ENCODE measurements at regions of chr16 and their contacts with region 1.

Region 1: DNA sequence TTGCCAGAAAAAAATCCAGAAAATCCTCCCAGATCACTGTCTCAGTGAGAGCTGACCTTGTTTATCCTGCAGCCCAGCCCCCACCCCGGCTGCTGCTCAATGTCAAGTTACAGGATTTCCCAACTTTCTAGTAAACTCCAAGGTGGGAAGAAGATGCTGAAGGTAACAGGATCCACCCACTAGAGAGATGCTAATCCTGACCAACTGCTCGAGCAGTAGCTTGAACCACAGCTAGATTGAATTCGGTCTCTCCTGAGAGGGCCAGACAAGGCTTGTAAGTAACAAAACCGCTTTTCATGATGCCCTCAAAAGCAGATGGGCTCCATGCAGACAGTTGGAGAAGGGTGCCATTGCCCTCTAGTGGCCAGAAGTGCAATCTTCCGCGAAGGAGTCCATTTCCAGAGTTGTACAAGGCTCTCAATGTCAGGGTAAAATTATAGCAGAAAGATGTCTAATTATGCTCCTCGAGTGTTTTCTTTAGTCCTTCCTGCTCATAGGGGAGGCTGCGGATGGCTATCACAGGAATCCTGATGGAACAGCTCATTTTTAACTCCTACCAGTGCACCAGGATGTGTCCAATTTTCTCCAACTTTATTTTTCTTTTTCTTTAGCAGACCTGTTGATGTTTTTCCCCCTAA is 3.9 kb downstream of the CDH11 start:
- DNase-seq: peak; percentile 70
- H3K4me3 ChIP-seq: no peak overlapping the region
- H3K27ac ChIP-seq: peak overlapping the region in 3 of 4 donors; percentile 20 to 37 (median 21)
- H3K4me1 ChIP-seq: peaks cover 0 to 39% (median 20%) of the 10 kb centered on the region in 4 donors
- H3K27me3 ChIP-seq: peaks cover 34% of the 10 kb centered on the region
- CTCF ChIP-seq: peak; percentile 80 to 89 (median 87)
- EP300 ChIP-seq: no peak
- POLR2A ChIP-seq: no peak

Region 2: DNA sequence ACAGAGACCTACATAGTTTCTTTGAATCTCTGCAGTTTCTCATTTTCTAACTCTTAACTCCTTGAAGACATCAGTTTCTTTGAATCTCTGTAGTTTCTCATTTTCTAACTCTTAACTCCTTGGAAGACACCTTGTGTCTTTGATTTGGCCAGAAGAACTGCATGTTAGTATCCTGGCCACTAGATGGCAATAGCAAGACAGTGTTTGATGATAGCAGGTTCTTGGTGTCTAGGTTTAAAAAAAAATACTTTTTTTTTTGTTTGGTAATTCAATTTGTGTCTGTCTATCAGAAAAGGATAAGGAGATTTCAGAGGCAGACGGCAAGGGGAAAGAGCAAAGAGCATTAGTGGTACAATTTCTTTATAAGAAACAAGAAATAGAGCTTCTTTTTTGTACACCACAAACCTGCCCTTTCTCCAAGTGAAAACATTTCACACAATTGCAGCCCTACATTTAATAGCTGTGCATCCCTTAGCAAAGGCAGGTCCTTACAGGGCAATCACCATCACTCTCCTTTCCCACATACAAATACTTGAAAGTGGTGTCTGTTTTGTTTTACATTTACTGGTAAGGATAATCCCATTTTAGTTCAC is 1756.8 kb before region 1 on chr16:
- in situ Hi-C with region 1: loop called in 1 of 4 experiments (anchors 25 kb)
- intact Hi-C with region 1: no loop called
- DNase-seq: no peak
- H3K4me3 ChIP-seq: no peak overlapping the region
- H3K27ac ChIP-seq: no peak overlapping the region
- H3K4me1 ChIP-seq: no peaks in the 10 kb centered on the region
- H3K27me3 ChIP-seq: no peaks in the 10 kb centered on the region
- CTCF ChIP-seq: peak; percentile 55 to 77 (median 61)
- EP300 ChIP-seq: no peak
- POLR2A ChIP-seq: no peak

Region 3: GRCh38 chr16:64089697-64090096 is 1028.2 kb before region 1 on chr16:
- in situ Hi-C with region 1: loop called in 1 of 4 experiments (anchors 25 kb)
- intact Hi-C with region 1: no loop called
- DNase-seq: no peak
- H3K4me3 ChIP-seq: no peak overlapping the region
- H3K27ac ChIP-seq: no peak overlapping the region
- H3K4me1 ChIP-seq: no peaks in the 10 kb centered on the region
- H3K27me3 ChIP-seq: no peaks in the 10 kb centered on the region
- CTCF ChIP-seq: peak in 3 of 5 experiments; percentile 29 to 33 (median 32)
- EP300 ChIP-seq: no peak
- POLR2A ChIP-seq: no peak

Region 4: DNA sequence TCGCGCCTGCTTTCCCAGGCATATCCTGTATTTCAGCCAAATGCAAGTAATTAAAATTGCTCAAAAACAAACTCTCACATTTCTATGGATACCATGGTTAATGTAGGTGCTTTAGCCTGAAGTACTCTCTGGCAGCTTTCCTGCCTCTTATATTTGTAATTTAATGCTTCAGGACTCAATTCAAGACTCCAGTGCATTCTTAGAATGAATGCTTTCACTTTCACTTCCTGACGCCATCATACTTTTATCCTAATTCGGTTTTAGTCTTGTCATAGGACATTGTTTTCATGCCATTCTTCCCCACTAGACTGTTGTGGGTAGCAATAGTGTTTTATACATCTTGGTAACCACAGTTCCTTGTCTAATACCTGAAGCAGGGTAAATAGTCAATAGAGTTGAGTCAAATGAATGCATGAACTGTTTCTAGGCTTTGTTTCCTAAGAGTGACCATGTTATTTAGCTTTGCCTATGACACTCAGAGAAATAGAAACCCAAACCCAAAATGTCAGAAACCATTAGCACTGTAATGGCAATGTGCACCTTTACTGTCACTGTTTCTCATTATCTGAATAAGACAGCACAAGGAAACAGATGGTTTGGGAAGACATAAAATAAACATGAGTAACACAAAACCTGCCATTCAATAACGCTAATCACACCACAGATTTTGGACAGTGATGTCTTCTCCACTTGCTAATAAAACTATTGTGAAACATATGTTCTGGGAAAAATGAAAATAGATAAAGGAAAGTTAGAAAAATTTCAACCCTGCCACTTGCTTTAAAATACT is 701.5 kb before region 1 on chr16:
- in situ Hi-C with region 1: loop called in 1 of 4 experiments (anchors 25 kb)
- intact Hi-C with region 1: no loop called
- DNase-seq: no peak
- H3K4me3 ChIP-seq: peak overlapping the region in 1 of 4 donors; percentile 20
- H3K27ac ChIP-seq: peak overlapping the region in 3 of 4 donors; percentile 10 to 21 (median 10)
- H3K4me1 ChIP-seq: peaks cover 0 to 27% (median 14%) of the 10 kb centered on the region in 4 donors
- H3K27me3 ChIP-seq: no peaks in the 10 kb centered on the region
- CTCF ChIP-seq: no peak
- EP300 ChIP-seq: no peak
- POLR2A ChIP-seq: no peak

Region 5: DNA sequence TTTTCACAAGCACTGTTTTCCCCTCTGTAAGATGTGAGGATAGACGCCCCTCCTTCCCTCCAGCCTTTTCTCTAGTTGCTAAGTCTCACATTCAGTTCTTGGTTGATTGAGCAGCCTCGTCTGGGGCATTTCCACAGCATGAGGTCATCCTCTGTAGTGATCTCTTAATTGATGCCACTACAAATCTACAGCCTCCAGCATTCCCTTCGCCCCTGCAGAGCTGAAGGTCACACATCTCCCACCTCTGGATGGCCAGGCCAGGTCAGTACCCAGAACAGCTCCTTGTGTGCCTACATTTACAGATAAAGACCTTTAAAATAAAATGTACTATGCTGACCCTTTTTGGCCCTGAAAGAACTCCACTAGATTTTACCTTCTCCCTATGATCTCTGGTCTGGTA is 36.4 kb after region 1 on chr16:
- in situ Hi-C with region 1: no loop called
- intact Hi-C with region 1: no loop called
- DNase-seq: no peak
- H3K4me3 ChIP-seq: no peak overlapping the region
- H3K27ac ChIP-seq: no peak overlapping the region
- H3K4me1 ChIP-seq: no peaks in the 10 kb centered on the region
- H3K27me3 ChIP-seq: no peaks in the 10 kb centered on the region
- CTCF ChIP-seq: no peak
- EP300 ChIP-seq: no peak
- POLR2A ChIP-seq: no peak